Activated CD4-positive, alpha-beta T cell treated with anti-CD3 and anti-CD28 coated beads for 36 hours (primary cell): ENCODE measurements at regions of chr2 and their contacts with region 1.

Region 1: DNA sequence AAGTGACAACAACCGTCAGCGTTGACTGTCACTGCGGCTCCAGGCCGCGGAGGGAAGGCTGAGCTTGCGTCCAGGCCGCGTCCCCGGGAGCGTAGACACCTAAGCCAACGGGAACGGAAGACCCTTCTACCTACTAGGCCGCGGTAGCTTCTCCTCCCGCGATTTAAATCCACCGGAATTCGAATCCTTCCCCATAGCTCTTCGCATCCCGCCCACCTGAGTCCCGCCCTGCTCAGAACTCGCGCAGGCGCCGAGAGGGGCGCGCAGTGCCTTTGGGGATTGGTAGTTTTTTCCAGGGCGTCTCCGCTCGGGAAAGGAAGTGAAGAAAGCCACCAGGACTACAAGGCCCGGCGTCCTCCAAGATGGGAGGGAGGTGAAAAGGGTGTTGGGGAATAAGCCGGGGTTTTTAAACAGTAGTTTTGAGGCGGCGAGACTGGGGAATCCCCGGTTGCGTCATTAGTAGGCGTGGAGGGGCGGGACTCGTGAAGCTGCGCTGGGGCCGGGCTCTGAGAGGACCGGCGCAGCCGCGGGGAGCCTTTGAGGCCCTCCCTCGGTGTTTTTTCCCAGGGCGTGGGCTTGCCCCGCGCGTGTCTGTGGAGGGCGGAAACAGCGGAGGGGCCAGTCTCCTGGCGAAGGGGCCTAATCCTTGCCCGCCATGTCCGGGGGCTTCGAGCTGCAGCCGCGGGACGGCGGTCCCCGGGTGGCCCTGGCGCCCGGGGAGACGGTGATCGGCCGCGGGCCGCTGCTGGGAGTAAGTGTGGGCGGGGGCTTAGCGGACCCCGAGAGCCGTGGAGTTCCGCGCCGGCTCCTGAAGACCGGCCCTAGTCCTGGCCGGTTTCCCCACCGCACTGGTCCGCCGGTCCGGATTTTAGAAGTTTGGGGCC is at the starts of genes APLF and FBXO48:
- DNase-seq: peak; percentile 99
- ATAC-seq: peak; percentile 93
- H3K4me3 Mint-ChIP-seq: peak within 1 kb of the TSS; percentile 93
- H3K27ac Mint-ChIP-seq: peak within 1 kb of the TSS; percentile 93
- H3K4me1 Mint-ChIP-seq: peaks cover 45% of the 10 kb centered on the region
- H3K27me3 Mint-ChIP-seq: no peaks in the 10 kb centered on the region
- total RNA-seq, gene APLF: 2.5 to 4.3 TPM
- total RNA-seq, gene FBXO48: 2.0 to 2.4 TPM

Region 2: GRCh38 chr2:67581751-67582150 is 885.6 kb before region 1 on chr2:
- CTCF ChIA-PET with region 1: no interaction called
- POLR2A ChIA-PET with region 1: no interaction called
- intact Hi-C with region 1: no loop called
- DNase-seq: no peak
- ATAC-seq: no peak
- H3K4me3 Mint-ChIP-seq: no peak overlapping the region
- H3K27ac Mint-ChIP-seq: no peak overlapping the region
- H3K4me1 Mint-ChIP-seq: no peaks in the 10 kb centered on the region
- H3K27me3 Mint-ChIP-seq: no peaks in the 10 kb centered on the region

Region 3: DNA sequence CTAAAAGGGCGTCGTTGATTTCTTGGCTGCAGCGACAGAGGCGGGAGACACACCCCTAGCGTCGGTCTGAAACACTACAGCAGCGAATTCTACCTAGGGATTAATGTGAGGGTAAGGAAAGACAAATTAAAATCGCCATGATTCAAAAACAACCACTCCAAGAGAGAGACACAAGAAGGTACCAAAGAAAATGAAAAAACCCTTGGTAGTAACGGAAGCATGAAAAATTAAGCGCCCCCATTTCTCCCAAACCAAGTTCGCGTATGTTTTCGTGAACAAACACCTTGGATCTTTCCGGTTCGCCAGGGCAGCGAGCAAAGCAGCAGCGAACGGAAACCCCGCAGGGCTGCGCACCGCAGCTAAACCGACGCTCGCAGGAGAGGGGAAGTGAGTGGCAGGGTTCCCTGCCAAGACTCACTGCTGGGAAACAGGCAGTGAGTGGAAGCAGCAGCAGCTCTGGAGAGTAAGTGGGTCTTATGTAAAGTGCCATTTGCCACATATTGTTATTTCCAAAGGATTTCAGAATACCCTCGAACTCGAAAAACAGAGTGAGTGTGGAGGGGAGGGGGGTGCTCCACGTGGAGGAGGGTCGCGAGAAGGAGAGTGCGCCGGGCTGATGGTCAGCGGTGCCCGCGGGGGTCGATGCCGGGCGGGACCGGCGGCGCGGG is 216.0 kb before region 1 on chr2:
- CTCF ChIA-PET with region 1: interaction called, 3 read pairs
- POLR2A ChIA-PET with region 1: no interaction called
- intact Hi-C with region 1: loop called (anchors 1 kb)
- DNase-seq: peak; percentile 87
- ATAC-seq: peak; percentile 71
- H3K4me3 Mint-ChIP-seq: peak overlapping the region; percentile 98
- H3K27ac Mint-ChIP-seq: peak overlapping the region; percentile 97
- H3K4me1 Mint-ChIP-seq: peaks cover 35% of the 10 kb centered on the region
- H3K27me3 Mint-ChIP-seq: no peaks in the 10 kb centered on the region

Region 4: GRCh38 chr2:68345129-68345875 is 122.0 kb before region 1 on chr2:
- CTCF ChIA-PET with region 1: no interaction called
- POLR2A ChIA-PET with region 1: no interaction called
- intact Hi-C with region 1: no loop called
- DNase-seq: no peak
- ATAC-seq: no peak
- H3K4me3 Mint-ChIP-seq: no peak overlapping the region
- H3K27ac Mint-ChIP-seq: no peak overlapping the region
- H3K4me1 Mint-ChIP-seq: no peaks in the 10 kb centered on the region
- H3K27me3 Mint-ChIP-seq: peaks cover 31% of the 10 kb centered on the region

Region 5: GRCh38 chr2:68516051-68516955 is 49.0 kb after region 1 on chr2:
- CTCF ChIA-PET with region 1: interaction called, 10 read pairs
- POLR2A ChIA-PET with region 1: no interaction called
- intact Hi-C with region 1: loop called (anchors 2 to 10 kb)
- DNase-seq: no peak
- ATAC-seq: peak; percentile 52
- H3K4me3 Mint-ChIP-seq: no peak overlapping the region
- H3K27ac Mint-ChIP-seq: no peak overlapping the region
- H3K4me1 Mint-ChIP-seq: peaks cover 7% of the 10 kb centered on the region
- H3K27me3 Mint-ChIP-seq: no peaks in the 10 kb centered on the region

Region 6: DNA sequence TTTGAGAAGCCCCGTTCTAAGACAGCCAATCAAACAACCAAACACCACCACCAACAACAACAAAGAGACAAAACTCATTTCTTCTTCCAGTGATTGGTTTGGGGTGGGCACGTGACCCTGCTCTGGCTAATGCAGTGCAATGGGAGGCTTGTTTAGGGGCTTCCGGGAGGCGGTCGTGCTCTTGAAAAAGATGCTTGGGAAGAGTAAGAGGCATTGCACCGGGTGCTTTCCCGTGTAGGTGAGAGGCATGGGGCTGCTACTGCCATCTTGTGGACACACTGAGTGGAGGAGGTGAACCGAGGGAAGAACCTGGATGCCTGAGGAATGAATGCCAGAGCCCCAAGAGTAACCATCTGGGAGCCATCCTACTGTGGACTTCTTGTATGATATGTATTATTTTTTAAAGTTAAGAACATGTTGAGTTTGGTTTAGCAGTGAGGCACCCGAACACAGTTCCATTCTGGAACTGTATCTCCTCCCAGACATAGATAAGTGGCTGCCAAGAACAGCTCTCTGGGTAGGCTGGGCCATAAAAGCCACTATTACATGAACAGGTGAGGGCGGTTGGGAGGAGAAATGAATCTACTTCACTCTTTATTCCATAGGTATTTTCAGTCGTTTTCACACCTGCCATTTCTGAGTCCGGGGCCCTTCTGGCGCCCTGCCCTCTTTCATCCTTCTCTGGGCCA is 248.2 kb after region 1 on chr2:
- CTCF ChIA-PET with region 1: interaction called, 24 read pairs
- POLR2A ChIA-PET with region 1: interaction called, 5 read pairs
- intact Hi-C with region 1: loop called (anchors 1 to 2 kb)
- DNase-seq: peak; percentile 75
- ATAC-seq: no peak
- H3K4me3 Mint-ChIP-seq: no peak overlapping the region
- H3K27ac Mint-ChIP-seq: peak overlapping the region; percentile 79
- H3K4me1 Mint-ChIP-seq: peaks cover 75% of the 10 kb centered on the region
- H3K27me3 Mint-ChIP-seq: no peaks in the 10 kb centered on the region

Region 7: GRCh38 chr2:68766376-68766845 is 299.1 kb after region 1 on chr2:
- CTCF ChIA-PET with region 1: interaction called, 10 read pairs
- POLR2A ChIA-PET with region 1: no interaction called
- intact Hi-C with region 1: loop called (anchors 1 kb)
- DNase-seq: peak; percentile 79
- ATAC-seq: peak; percentile 67
- H3K4me3 Mint-ChIP-seq: peak overlapping the region; percentile 72
- H3K27ac Mint-ChIP-seq: peak overlapping the region; percentile 99
- H3K4me1 Mint-ChIP-seq: peaks cover 98% of the 10 kb centered on the region
- H3K27me3 Mint-ChIP-seq: no peaks in the 10 kb centered on the region

Region 8: DNA sequence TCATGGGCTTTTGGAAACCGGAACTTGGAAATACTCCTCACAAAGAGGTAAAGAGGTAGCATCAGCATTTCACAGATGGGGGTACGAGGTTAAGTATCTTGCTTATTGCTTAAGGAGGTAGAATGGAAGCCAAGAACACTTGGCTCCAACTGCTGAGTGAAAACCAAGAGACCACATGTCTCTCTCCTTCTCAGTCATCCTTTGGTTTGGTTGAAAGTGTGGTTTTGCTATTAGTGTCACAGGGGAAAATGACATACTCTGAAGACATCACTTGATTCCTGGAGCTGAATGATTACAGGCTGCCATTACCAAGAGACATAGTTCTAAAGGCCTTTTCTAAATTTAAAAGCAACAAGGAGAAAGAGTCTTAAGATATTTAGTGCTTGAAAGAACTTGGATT is 587.1 kb after region 1 on chr2:
- CTCF ChIA-PET with region 1: no interaction called
- POLR2A ChIA-PET with region 1: no interaction called
- intact Hi-C with region 1: loop called in 1 of 2 experiments (anchors 5 kb)
- DNase-seq: peak; percentile 21
- ATAC-seq: peak; percentile 99
- H3K4me3 Mint-ChIP-seq: no peak overlapping the region
- H3K27ac Mint-ChIP-seq: no peak overlapping the region
- H3K4me1 Mint-ChIP-seq: peaks cover 8% of the 10 kb centered on the region
- H3K27me3 Mint-ChIP-seq: peaks cover 47% of the 10 kb centered on the region

Region 9: GRCh38 chr2:69411120-69411519 is 943.8 kb after region 1 on chr2:
- CTCF ChIA-PET with region 1: no interaction called
- POLR2A ChIA-PET with region 1: no interaction called
- intact Hi-C with region 1: no loop called
- DNase-seq: no peak
- ATAC-seq: no peak
- H3K4me3 Mint-ChIP-seq: no peak overlapping the region
- H3K27ac Mint-ChIP-seq: no peak overlapping the region
- H3K4me1 Mint-ChIP-seq: peaks cover 8% of the 10 kb centered on the region
- H3K27me3 Mint-ChIP-seq: no peaks in the 10 kb centered on the region

Region 10: DNA sequence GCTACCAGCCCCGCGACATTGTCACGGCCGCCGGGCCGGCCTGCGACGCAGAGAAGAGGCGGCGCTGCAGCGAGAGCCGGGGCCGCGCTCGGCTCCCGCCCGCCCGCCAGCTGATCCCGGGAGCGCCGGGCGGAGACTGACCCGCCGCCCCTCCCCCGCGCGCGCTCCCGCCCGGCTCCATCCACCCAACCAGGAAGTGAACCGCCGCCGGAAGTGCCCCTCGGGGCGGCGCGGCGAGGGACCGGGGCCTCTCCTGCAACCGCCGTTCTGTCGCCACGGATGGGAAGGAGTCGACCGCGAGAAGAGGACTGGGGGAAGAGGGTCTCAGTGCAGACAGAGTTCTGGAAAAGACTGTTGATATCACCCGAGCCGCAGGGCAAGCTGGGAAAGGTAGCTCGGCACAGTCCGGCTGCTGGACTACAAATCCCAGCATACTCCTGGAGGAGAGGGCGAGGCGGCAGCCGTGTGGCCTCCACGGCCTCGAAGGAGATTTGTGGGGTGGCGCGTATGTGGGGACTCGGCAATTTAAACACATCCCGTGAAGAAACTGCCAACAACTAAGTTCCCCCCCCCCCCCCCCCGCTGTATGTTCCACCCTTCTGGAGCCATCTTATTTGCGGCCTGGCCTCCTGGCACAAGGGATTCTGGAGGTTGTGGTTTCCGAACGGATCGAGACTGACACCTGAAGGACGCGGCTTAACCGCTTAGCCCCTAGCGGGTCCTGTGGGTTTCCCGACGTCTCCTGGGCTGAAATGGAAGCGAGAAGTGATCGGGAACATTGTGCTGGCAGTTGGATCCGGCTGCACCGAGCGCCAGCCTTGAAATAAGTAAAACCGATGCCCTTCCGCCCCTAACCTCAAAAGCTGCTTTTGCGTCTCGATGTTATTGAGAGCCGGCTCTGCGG is 1176.5 kb after region 1 on chr2 and contains the start of gene AAK1:
- CTCF ChIA-PET with region 1: no interaction called
- POLR2A ChIA-PET with region 1: no interaction called
- intact Hi-C with region 1: loop called in 1 of 2 experiments (anchors 5 kb)
- DNase-seq: peak; percentile 94
- ATAC-seq: peak; percentile 60
- H3K4me3 Mint-ChIP-seq: peak within 1 kb of the TSS; percentile 82
- H3K27ac Mint-ChIP-seq: peak within 1 kb of the TSS; percentile 99
- H3K4me1 Mint-ChIP-seq: peaks cover 50% of the 10 kb centered on the region
- H3K27me3 Mint-ChIP-seq: no peaks in the 10 kb centered on the region
- total RNA-seq, gene AAK1: 95.9 to 104 TPM